Mammary epithelial cell (primary cell): ENCODE measurements at regions of chr15 and their contacts with region 1.

Region 1: GRCh38 chr15:75201609-75202250 is at the start of gene C15orf39:
- DNase-seq: peak; percentile 67
- H3K4me3 ChIP-seq: peak within 1 kb of the TSS; percentile 78 to 95 (median 87)
- H3K27ac ChIP-seq: peak within 1 kb of the TSS; percentile 89
- H3K4me1 ChIP-seq: peaks cover 33% of the 10 kb centered on the region
- H3K27me3 ChIP-seq: no peaks in the 10 kb centered on the region
- CTCF ChIP-seq: peak; percentile 40 to 62
- total RNA-seq, gene C15orf39: 3.8 to 22.8 TPM

Region 2: GRCh38 chr15:74604983-74605794 is 596.5 kb before region 1 on chr15:
- CTCF ChIA-PET with region 1: no interaction called
- dilution Hi-C with region 1: no loop called
- in situ Hi-C with region 1: no loop called
- intact Hi-C with region 1: no loop called
- DNase-seq: no peak
- H3K4me3 ChIP-seq: no peak overlapping the region
- H3K27ac ChIP-seq: no peak overlapping the region
- H3K4me1 ChIP-seq: no peaks in the 10 kb centered on the region
- H3K27me3 ChIP-seq: no peaks in the 10 kb centered on the region
- CTCF ChIP-seq: no peak

Region 3: GRCh38 chr15:74781431-74782258 is 420.1 kb before region 1 on chr15 and contains the start of gene CSK:
- CTCF ChIA-PET with region 1: no interaction called
- dilution Hi-C with region 1: no loop called
- in situ Hi-C with region 1: no loop called
- intact Hi-C with region 1: loop called (anchors 5 kb)
- DNase-seq: peak; percentile 49
- H3K4me3 ChIP-seq: peak within 1 kb of the TSS; percentile 67 to 79 (median 77)
- H3K27ac ChIP-seq: peak within 1 kb of the TSS; percentile 39
- H3K4me1 ChIP-seq: peaks cover 42% of the 10 kb centered on the region
- H3K27me3 ChIP-seq: no peaks in the 10 kb centered on the region
- CTCF ChIP-seq: peak; percentile 32 to 58
- total RNA-seq, gene CSK: 23.2 to 64.6 TPM

Region 4: DNA sequence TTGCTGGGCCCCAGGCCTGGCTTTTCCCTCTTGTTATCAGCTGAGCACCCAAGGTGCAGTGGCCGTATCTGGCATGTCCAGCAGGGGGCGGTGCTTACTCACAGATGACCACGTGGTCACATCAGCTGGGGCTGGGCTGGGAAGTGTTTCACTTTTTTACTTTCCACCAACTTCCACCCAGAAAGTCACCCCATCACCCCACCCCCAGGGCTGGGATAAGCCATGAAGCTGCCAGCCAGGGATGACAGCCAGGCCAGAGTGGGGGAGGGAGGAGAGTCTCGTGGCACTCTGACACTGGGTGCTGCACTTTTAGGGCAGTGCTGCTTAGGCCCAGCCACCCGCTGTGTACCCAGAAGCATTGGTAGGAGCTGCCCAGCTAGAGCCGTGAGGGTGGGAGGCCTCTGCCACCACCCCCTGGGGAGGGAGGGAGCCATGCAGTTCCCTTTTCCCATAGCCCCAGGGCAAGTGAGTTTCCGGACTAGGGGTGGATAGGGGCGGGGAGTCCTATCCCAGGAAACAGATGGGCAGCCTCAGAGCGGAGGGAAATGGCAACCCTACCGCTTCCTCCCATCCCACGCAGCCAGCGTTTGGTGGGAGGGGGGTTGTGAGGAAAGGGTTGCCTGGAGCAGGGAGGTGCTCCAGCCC is 172.2 kb before region 1 on chr15:
- CTCF ChIA-PET with region 1: interaction called, 8 read pairs
- dilution Hi-C with region 1: no loop called
- in situ Hi-C with region 1: loop called (anchors 5 kb)
- intact Hi-C with region 1: loop called (anchors 1 kb)
- DNase-seq: peak; percentile 66
- H3K4me3 ChIP-seq: no peak overlapping the region
- H3K27ac ChIP-seq: no peak overlapping the region
- H3K4me1 ChIP-seq: peaks cover 18% of the 10 kb centered on the region
- H3K27me3 ChIP-seq: no peaks in the 10 kb centered on the region
- CTCF ChIP-seq: peak; percentile 89 to 92

Region 5: DNA sequence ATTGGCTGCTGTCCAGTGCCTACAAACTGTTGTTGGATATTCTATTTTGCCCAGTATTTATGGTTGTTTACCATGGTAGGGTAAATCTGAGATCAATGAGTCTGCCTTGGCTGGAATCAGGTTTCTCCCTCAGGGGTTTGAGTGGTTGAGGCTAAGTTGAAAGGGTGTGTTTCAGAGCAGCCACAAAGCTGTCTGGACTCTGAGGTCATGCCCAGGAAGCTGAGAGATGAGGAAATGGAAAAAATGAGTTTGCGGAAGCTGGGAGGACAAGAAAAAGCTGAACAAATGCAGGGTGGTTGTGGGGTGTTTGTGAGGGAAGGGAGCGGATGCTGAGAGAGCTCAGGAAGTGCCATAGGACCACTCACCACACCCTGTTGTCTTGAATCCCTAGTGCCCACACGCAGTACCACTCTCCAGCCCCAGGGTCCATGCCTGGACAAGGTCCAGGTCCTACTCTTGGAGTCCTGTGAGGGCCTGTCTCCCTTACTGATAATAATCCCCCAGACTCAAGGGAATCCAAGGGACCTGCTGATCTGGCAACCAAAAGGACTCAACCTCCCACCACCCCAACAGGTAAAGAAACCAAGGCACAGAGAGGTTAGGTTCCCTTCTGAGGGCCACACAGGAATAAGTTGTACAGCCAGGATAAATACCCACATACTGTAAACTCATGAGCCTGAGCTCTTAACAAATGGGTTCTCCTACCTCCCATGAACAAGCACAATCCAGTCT is 96.8 kb before region 1 on chr15:
- CTCF ChIA-PET with region 1: interaction called, 6 read pairs
- dilution Hi-C with region 1: no loop called
- in situ Hi-C with region 1: loop called in 1 of 2 experiments (anchors 5 kb)
- intact Hi-C with region 1: loop called (anchors 1 kb)
- DNase-seq: peak; percentile 95
- H3K4me3 ChIP-seq: no peak overlapping the region
- H3K27ac ChIP-seq: peak overlapping the region; percentile 45
- H3K4me1 ChIP-seq: peaks cover 31% of the 10 kb centered on the region
- H3K27me3 ChIP-seq: peaks cover 3% of the 10 kb centered on the region
- CTCF ChIP-seq: peak in 1 of 2 donors; percentile 5

Region 6: DNA sequence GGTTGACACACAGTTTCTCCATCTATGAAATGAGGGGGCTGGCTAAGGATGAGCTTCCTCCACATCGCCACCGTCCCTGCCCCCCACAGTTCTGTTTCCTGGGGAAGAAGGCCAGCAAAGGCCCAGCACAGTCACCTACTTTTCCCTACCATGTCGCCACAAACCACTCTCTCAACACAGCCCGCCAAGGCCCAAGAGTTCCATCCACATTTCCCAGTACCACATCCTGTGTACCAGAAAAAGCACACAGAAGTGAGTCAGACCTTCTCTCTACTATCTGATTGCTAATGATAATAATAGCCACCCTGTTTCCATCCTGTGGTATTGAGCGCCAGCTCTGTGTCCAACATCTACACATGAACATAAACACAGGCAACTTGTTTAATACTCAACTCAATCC is 30.3 kb before region 1 on chr15:
- CTCF ChIA-PET with region 1: no interaction called
- dilution Hi-C with region 1: no loop called
- in situ Hi-C with region 1: no loop called
- intact Hi-C with region 1: loop called (anchors 1 kb)
- DNase-seq: peak; percentile 91
- H3K4me3 ChIP-seq: no peak overlapping the region
- H3K27ac ChIP-seq: peak overlapping the region; percentile 73
- H3K4me1 ChIP-seq: peaks cover 65% of the 10 kb centered on the region
- H3K27me3 ChIP-seq: no peaks in the 10 kb centered on the region
- CTCF ChIP-seq: no peak